ENCODE measurements at regions of chr7 and their contacts with region 1.

Region 1: DNA sequence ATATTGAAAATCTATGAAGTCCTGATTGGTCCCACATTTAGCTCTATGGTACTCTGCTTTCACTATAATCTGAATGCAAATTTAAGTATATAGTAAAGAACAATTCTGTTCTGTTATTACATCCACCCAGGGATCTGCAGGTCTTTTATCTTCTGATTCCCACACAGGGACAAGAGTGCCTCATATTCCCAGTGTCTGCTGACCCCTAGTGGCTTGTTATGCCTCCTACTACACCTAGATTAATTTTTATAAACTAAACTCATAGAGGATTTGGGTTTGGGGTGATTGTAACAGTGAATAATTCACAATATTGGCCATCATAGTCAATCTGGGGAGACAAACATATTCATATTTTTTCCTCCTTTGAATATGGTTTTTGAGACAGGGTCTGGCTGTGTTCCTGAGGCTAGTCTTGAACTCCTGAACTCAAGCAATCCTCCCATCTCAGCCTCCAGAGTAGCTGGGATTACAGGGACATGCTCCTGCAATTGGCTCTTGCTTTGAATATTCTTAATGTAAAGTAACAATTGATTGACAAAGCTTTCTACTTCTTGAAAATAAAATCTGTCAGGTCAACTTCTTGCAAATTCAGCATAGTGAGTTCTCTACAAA is 282.1 kb downstream of the KCND2 start:
- DNase-seq: peak; percentile 73
- H3K4me3 ChIP-seq: no peak overlapping the region
- H3K27ac ChIP-seq: no peak overlapping the region
- H3K4me1 ChIP-seq: no peaks in the 10 kb centered on the region; the same call in 1 of the 2 replicates
- H3K27me3 ChIP-seq: peaks cover 12% of the 10 kb centered on the region; the same call in 1 of the 2 replicates

Region 2: GRCh38 chr7:119270045-119270464 is 1285.0 kb before region 1 on chr7:
- in situ Hi-C with region 1: loop called (anchors 25 kb)
- DNase-seq: peak; percentile 82
- H3K4me3 ChIP-seq: no peak overlapping the region
- H3K27ac ChIP-seq: no peak overlapping the region
- H3K4me1 ChIP-seq: no peaks in the 10 kb centered on the region
- H3K27me3 ChIP-seq: no peaks in the 10 kb centered on the region

Region 3: GRCh38 chr7:119935418-119936025 is 619.5 kb before region 1 on chr7:
- in situ Hi-C with region 1: loop called (anchors 25 kb)
- DNase-seq: peak; percentile 64
- H3K4me3 ChIP-seq: no peak overlapping the region
- H3K27ac ChIP-seq: no peak overlapping the region
- H3K4me1 ChIP-seq: peaks cover 3% of the 10 kb centered on the region; the same call in 1 of the 2 replicates
- H3K27me3 ChIP-seq: no peaks in the 10 kb centered on the region

Region 4: GRCh38 chr7:120280743-120281142 is 274.3 kb before region 1 on chr7:
- in situ Hi-C with region 1: no loop called
- DNase-seq: peak; percentile 45
- H3K4me3 ChIP-seq: no peak overlapping the region
- H3K27ac ChIP-seq: no peak overlapping the region
- H3K4me1 ChIP-seq: 0 out of 2 replicates have a peak, but pooled peaks cover 3% of the 10 kb centered on the region
- H3K27me3 ChIP-seq: no peaks in the 10 kb centered on the region

Region 5: GRCh38 chr7:120695848-120696247 is 140.8 kb after region 1 on chr7:
- in situ Hi-C with region 1: no loop called
- DNase-seq: no peak
- H3K4me3 ChIP-seq: no peak overlapping the region
- H3K27ac ChIP-seq: no peak overlapping the region
- H3K4me1 ChIP-seq: no peaks in the 10 kb centered on the region
- H3K27me3 ChIP-seq: no peaks in the 10 kb centered on the region

Measured in GM23248 (cell line).